ENCODE measurements at regions of chr17 and their contacts with region 1.

Region 1: GRCh38 chr17:45135192-45135977 is at the start of gene ACBD4:
- DNase-seq: peak; percentile 95 to 99 (median 98)
- ATAC-seq: peak; percentile 86
- H3K4me3 ChIP-seq: peak within 1 kb of the TSS; percentile 92 to 98
- H3K4me3 Mint-ChIP-seq: peak within 1 kb of the TSS; percentile 90
- H3K27ac ChIP-seq: peak within 1 kb of the TSS; percentile 62 to 78
- H3K27ac Mint-ChIP-seq: peak within 1 kb of the TSS; percentile 84
- H3K4me1 ChIP-seq: peaks cover 12% of the 10 kb centered on the region
- H3K4me1 Mint-ChIP-seq: peaks cover 28% of the 10 kb centered on the region
- H3K27me3 ChIP-seq: no peaks in the 10 kb centered on the region
- H3K27me3 Mint-ChIP-seq: peaks cover 2% of the 10 kb centered on the region
- CTCF ChIP-seq: peak; percentile 100
- total RNA-seq, gene ACBD4: 15.5 to 19.3 TPM

Region 2: DNA sequence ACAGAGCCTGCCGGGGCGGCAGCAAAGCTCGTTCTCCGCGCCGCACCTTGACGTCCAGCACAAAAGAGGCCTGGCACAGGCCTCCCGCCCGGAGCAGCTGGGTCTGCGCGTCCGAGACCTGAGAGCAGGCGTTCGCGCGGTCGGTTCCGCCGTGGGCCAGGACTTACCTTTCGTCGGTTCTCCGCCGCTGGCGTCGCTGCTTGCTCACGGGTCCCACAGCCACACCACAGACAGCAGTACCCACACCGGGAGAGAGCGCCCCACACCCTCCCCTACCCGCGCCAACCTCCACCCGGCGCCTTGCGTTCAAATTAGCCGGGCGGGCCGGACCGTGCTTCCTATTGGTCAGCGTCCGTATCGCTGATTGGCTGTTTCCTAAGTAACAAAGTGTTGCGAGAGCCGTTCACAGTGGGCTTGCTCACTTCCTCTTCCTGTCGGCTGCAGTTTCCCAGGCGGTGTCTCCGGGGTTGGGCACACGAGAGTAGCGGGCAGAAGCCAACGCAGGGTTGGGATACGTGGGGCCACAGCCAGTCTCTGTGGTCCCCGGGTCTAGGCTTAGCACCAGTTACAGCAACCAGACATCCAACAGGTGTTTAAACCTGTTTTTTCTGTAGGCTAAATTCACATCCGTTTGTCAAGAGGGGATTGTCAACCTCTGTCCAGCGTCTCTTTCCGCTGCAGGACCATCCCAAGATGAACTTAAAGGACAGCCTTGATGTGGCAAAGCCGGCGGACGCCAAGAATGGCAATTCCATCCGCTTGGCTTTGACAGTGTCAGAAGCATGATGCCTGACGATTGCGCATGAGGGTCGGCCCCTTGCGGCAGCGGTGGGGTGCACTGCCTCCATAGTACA is 187.7 kb before region 1 on chr17 and contains the start of gene KIF18B:
- CTCF ChIA-PET with region 1: no interaction called
- POLR2A ChIA-PET with region 1: no interaction called
- intact Hi-C with region 1: loop called in 1 of 2 experiments (anchors 2 kb)
- DNase-seq: peak; percentile 72 to 94 (median 87)
- ATAC-seq: peak; percentile 97
- H3K4me3 ChIP-seq: peak within 1 kb of the TSS; percentile 57 to 68
- H3K4me3 Mint-ChIP-seq: peak within 1 kb of the TSS; percentile 93
- H3K27ac ChIP-seq: peak within 1 kb of the TSS; percentile 47 to 67
- H3K27ac Mint-ChIP-seq: peak within 1 kb of the TSS; percentile 93
- H3K4me1 ChIP-seq: peaks cover 9% of the 10 kb centered on the region
- H3K4me1 Mint-ChIP-seq: peaks cover 13% of the 10 kb centered on the region
- H3K27me3 ChIP-seq: peaks cover 0 to 5% of the 10 kb centered on the region in 2 experiments
- H3K27me3 Mint-ChIP-seq: peaks cover 5% of the 10 kb centered on the region
- CTCF ChIP-seq: no peak
- total RNA-seq, gene KIF18B: 0.11 TPM in 1 of 2 experiments, not detected in the other

Region 3: DNA sequence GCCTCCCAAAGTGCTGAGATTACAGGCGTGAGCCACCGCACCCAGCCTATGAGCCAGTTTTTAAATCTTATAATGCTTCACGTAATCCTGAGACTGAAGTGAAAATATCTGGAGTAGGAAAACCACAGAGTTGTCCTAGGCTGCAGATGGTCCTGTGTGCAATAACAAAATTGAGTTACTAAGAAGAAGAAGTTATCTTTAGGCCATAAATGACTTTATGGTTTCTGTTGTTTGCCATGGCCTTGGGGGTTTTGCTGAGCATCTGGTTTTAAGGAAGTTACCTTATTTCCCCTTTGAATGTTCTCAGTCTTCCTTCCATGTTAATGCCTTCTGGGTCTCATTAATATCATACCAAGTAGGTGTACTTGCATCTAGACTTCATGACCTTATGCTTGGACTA is 57.7 kb before region 1 on chr17:
- CTCF ChIA-PET with region 1: no interaction called
- POLR2A ChIA-PET with region 1: no interaction called
- intact Hi-C with region 1: no loop called
- DNase-seq: no peak
- ATAC-seq: no peak
- H3K4me3 ChIP-seq: no peak overlapping the region
- H3K4me3 Mint-ChIP-seq: no peak overlapping the region
- H3K27ac ChIP-seq: no peak overlapping the region
- H3K27ac Mint-ChIP-seq: peak overlapping the region; percentile 32
- H3K4me1 ChIP-seq: no peaks in the 10 kb centered on the region
- H3K4me1 Mint-ChIP-seq: peaks cover 27% of the 10 kb centered on the region
- H3K27me3 ChIP-seq: no peaks in the 10 kb centered on the region
- H3K27me3 Mint-ChIP-seq: no peaks in the 10 kb centered on the region
- CTCF ChIP-seq: no peak

Region 4: GRCh38 chr17:45118691-45119090 is 16.7 kb before region 1 on chr17:
- CTCF ChIA-PET with region 1: interaction called, 15 read pairs
- POLR2A ChIA-PET with region 1: no interaction called
- intact Hi-C with region 1: no loop called
- DNase-seq: peak in 1 of 9 experiments; percentile 18
- ATAC-seq: no peak
- H3K4me3 ChIP-seq: no peak overlapping the region
- H3K4me3 Mint-ChIP-seq: no peak overlapping the region
- H3K27ac ChIP-seq: no peak overlapping the region
- H3K27ac Mint-ChIP-seq: no peak overlapping the region
- H3K4me1 ChIP-seq: no peaks in the 10 kb centered on the region
- H3K4me1 Mint-ChIP-seq: no peaks in the 10 kb centered on the region
- H3K27me3 ChIP-seq: no peaks in the 10 kb centered on the region
- H3K27me3 Mint-ChIP-seq: peaks cover 2% of the 10 kb centered on the region
- CTCF ChIP-seq: no peak

Region 5: DNA sequence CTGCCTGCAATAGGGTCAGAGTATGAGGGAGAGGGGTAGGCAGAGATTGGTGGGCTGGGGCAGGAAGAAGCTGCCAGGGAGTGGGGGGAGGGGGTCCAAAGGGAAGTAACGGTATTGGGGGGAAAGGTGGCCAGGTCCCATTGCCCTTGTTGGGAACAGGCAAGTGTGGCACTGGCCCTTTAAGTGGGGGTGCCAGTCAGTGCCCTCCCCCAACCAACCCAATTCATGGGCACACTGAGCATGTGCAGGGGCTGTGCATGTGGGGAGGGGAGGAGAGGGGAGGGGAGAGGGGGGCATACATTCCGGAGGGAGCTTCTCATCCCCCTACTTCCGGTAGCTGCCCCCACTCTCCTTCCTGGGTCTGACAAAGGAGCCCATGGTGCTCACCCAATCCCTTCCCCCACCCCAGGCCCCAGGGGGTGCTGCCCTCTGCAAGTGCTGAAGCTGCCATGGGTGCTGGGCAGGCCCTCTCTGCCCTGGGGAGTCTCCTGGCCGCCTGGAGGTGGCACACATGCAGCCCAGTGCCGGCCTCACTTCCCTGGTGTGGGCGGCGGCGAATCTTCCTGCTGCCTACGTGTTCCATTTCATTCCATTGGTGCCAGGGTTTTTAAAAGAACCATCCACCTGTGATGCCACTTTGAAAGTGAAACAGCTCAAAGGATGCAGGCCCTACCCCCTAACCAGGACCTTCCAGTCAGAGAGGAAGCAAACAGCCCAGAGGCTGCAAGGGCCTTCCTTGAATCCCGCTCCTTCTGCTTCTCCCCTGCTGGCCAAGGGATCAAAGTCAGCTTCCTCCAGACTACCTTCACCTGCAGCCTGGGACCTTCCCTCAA is 37.3 kb after region 1 on chr17:
- CTCF ChIA-PET with region 1: interaction called, 32 read pairs
- POLR2A ChIA-PET with region 1: interaction called, 6 read pairs
- intact Hi-C with region 1: loop called in 1 of 2 experiments (anchors 1 kb)
- DNase-seq: peak in 8 of 9 experiments; percentile 39 to 76 (median 52)
- ATAC-seq: peak; percentile 81
- H3K4me3 ChIP-seq: peak overlapping the region; percentile 35 to 65
- H3K4me3 Mint-ChIP-seq: peak overlapping the region; percentile 80
- H3K27ac ChIP-seq: peak overlapping the region; percentile 31 to 66
- H3K27ac Mint-ChIP-seq: peak overlapping the region; percentile 91
- H3K4me1 ChIP-seq: peaks cover 26% of the 10 kb centered on the region
- H3K4me1 Mint-ChIP-seq: peaks cover 23% of the 10 kb centered on the region
- H3K27me3 ChIP-seq: no peaks in the 10 kb centered on the region
- H3K27me3 Mint-ChIP-seq: no peaks in the 10 kb centered on the region
- CTCF ChIP-seq: no peak

Region 6: GRCh38 chr17:45218895-45219661 is 83.7 kb after region 1 on chr17:
- CTCF ChIA-PET with region 1: interaction called, 26 read pairs
- POLR2A ChIA-PET with region 1: interaction called, 3 read pairs
- intact Hi-C with region 1: no loop called
- DNase-seq: peak; percentile 79 to 95 (median 89)
- ATAC-seq: peak; percentile 45
- H3K4me3 ChIP-seq: peak overlapping the region in 1 of 2 experiments; percentile 1
- H3K4me3 Mint-ChIP-seq: peak overlapping the region; percentile 91
- H3K27ac ChIP-seq: no peak overlapping the region
- H3K27ac Mint-ChIP-seq: peak overlapping the region; percentile 90
- H3K4me1 ChIP-seq: peaks cover 25% of the 10 kb centered on the region
- H3K4me1 Mint-ChIP-seq: peaks cover 37% of the 10 kb centered on the region
- H3K27me3 ChIP-seq: no peaks in the 10 kb centered on the region
- H3K27me3 Mint-ChIP-seq: no peaks in the 10 kb centered on the region
- CTCF ChIP-seq: peak; percentile 96

Region 7: DNA sequence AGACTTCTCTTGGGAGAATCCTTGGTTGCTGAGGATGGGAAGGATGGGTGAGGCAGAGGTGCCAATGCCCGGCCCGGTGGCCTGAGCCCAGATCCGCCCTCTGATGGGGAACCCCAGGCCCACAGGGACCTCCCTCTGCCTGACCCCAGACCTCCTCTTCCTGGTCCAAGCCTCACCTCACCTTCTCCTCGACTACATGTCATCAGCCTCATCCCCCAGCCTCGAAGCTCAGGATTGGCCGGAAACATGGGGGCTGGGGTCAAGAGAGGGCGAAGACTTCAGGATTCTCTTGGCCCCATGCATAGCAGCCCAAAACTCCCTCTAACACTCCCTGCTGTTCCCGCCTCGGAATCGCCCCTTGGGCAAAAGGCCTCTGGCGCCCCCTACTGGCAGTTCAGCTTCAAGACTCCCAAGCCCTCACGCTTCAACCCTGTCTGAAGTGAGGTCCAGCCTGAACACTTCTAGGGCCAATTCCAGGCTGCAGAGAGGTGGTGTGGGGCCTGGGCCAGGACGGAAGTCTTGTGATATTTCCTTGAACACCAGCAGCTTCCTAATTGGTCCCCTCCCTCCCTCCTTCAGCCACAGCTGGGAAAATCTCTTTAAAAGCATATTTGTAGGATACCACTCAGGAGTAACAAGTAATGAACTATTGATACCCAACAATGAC is 250.1 kb after region 1 on chr17:
- CTCF ChIA-PET with region 1: interaction called, 11 read pairs
- POLR2A ChIA-PET with region 1: no interaction called
- intact Hi-C with region 1: loop called (anchors 1 to 2 kb)
- DNase-seq: peak; percentile 72 to 96 (median 88)
- ATAC-seq: peak; percentile 95
- H3K4me3 ChIP-seq: no peak overlapping the region
- H3K4me3 Mint-ChIP-seq: no peak overlapping the region
- H3K27ac ChIP-seq: no peak overlapping the region
- H3K27ac Mint-ChIP-seq: no peak overlapping the region
- H3K4me1 ChIP-seq: peaks cover 10% of the 10 kb centered on the region
- H3K4me1 Mint-ChIP-seq: peaks cover 14% of the 10 kb centered on the region
- H3K27me3 ChIP-seq: peaks cover 0 to 3% of the 10 kb centered on the region in 2 experiments
- H3K27me3 Mint-ChIP-seq: peaks cover 11% of the 10 kb centered on the region
- CTCF ChIP-seq: peak; percentile 98